ENCODE measurements at regions of chr11 and their contacts with region 1.

Region 1: DNA sequence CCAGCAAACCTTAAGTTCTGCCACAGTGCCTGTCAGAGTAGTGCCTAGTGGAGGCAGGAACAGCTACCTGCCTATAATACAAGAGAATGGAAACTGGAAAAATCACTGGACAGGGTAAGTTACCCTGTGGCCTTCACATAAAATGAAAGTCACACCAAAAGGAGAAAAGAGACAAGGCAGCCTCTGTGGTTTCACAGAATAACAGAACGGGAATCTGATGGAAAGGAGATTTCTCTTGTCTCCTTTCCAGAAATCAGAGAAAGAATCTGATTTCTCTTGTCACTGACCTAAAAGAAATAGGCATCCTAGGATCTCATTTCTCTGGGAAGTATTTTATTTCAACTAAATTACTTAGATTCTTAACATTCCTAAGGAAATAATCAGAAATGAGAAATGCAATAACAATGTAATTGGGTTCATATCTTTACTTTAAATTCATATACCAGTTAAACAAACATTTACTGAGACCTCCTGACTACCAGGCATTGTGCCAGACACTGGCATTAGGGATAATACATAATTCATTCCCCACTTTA is 41.6 kb downstream of the PRCP start:
- DNase-seq: peak; percentile 98
- ATAC-seq: peak; percentile 80
- H3K4me3 ChIP-seq: peak overlapping the region; percentile 55
- H3K27ac ChIP-seq: peak overlapping the region; percentile 74
- H3K4me1 ChIP-seq: peaks cover 46% of the 10 kb centered on the region
- H3K27me3 ChIP-seq: no peaks in the 10 kb centered on the region
- CTCF ChIP-seq: no peak

Region 2: GRCh38 chr11:82775736-82776346 is 82.8 kb before region 1 on chr11:
- CTCF ChIA-PET with region 1: interaction called, 13 read pairs
- POLR2A ChIA-PET with region 1: no interaction called
- intact Hi-C with region 1: no loop called
- DNase-seq: peak; percentile 89
- ATAC-seq: peak; percentile 96
- H3K4me3 ChIP-seq: no peak overlapping the region
- H3K27ac ChIP-seq: no peak overlapping the region
- H3K4me1 ChIP-seq: peaks cover 13% of the 10 kb centered on the region; the same call in 1 of the 2 replicates
- H3K27me3 ChIP-seq: no peaks in the 10 kb centered on the region
- CTCF ChIP-seq: peak; percentile 93

Region 3: DNA sequence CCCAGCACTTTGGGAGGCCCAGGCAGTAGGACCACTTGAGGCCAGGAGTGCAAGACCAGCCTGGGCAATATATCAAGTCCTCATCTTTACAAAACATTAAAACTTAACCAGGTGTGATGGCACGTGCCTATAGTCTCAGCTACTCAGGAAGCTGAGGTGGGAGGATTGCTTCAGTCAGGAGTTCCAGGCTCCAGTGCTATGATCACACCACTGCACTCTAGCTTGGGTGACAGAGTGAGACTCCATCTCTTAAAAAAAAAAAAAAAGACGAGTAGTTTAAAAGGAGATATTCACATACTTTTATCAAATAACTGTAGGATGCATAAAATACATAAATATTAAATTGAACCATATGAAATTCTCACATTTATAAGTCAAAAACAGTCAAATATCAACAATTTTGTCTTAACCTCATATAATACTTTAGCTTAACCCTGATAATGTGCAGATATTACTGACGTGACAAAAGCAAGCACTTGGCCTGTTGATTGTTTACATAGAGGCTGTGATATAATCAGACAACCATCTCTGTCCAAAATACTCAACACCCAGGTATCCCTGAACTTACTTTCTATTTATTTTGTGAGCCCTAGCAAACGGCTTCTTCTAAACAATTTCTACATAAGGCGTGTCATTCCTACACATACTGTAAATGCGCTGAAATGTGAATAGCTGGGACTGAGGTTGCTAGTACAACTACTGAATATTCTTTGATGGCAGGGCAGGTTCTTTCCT is 15.4 kb before region 1 on chr11:
- CTCF ChIA-PET with region 1: no interaction called
- POLR2A ChIA-PET with region 1: no interaction called
- intact Hi-C with region 1: loop called (anchors 1 kb)
- DNase-seq: peak; percentile 82
- ATAC-seq: peak; percentile 94
- H3K4me3 ChIP-seq: 0 out of 2 replicates have a peak overlapping the region, but pooled peaks have one; percentile 7
- H3K27ac ChIP-seq: 0 out of 2 replicates have a peak overlapping the region, but pooled peaks have one; percentile 9
- H3K4me1 ChIP-seq: peaks cover 15% of the 10 kb centered on the region
- H3K27me3 ChIP-seq: no peaks in the 10 kb centered on the region
- CTCF ChIP-seq: no peak

Region 4: GRCh38 chr11:83175815-83176214 is 317.2 kb after region 1 on chr11:
- CTCF ChIA-PET with region 1: no interaction called
- POLR2A ChIA-PET with region 1: interaction called, 10 read pairs
- intact Hi-C with region 1: no loop called
- DNase-seq: no peak
- ATAC-seq: no peak
- H3K4me3 ChIP-seq: no peak overlapping the region
- H3K27ac ChIP-seq: no peak overlapping the region
- H3K4me1 ChIP-seq: 0 out of 2 replicates have a peak, but pooled peaks cover 4% of the 10 kb centered on the region
- H3K27me3 ChIP-seq: no peaks in the 10 kb centered on the region
- CTCF ChIP-seq: no peak

Measured in PC-3 (cell line).